ENCODE measurements at regions of chr12 and their contacts with region 1.

Region 1: DNA sequence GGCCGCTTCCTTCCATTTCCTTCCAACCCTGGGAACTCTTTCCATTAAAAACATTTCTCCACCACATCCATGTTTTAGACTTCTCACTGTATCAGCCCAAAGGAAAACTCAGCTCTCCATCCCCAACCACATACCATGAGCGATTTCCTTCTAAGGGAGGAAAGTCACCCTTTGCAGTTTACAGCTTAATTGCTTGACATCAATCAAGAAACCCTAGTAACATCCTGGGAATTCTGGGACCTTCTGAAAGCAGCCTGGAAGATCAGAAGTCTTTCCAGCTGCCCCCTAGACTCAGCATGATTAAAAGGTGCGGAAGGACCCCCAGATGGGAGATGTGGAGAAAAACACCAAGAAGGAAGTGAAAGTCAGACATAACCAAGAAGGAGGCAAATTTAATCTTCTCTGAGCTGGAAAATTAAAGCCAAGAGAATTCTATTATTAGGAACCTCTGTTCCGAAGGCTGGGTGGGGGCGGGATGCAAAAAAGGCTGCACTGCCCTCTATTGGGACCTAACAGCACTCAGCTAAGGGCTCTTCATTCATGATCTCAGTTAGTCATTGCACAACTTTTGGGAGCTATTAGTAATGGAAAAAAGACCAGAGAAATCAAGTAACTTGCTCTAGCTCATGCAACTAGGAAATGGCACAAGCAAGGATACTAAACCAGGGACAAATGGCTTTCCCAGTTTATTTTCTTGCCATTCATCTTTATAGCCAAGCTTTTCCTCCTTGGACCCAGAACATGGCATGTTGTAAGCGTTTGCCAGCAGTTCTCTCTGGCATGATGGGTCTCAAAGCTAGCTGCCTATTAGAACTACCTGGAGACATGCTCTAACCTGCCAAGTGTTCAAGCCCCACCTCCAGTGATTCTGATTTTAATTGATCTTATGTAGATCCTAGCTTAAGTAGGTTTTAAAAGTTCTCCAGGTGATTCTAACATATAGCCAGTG is 73.1 kb upstream of the PLXNC1 start:
- DNase-seq: peak; percentile 90

Region 2: GRCh38 chr12:93707836-93708235 is 367.4 kb before region 1 on chr12:
- intact Hi-C with region 1: no loop called
- DNase-seq: no peak

Region 3: GRCh38 chr12:93908846-93909567 is 166.2 kb before region 1 on chr12:
- intact Hi-C with region 1: loop called in 1 of 2 experiments (anchors 5 kb)
- DNase-seq: no peak

Region 4: GRCh38 chr12:94525951-94526350 is 450.7 kb after region 1 on chr12:
- intact Hi-C with region 1: no loop called
- DNase-seq: no peak